ENCODE measurements at regions of chr14 and their contacts with region 1.

Region 1: GRCh38 chr14:50599700-50600444 is 39.9 kb downstream of the ATL1 start:
- DNase-seq: peak; percentile 60
- ATAC-seq: peak; percentile 65; the same call in 1 of the 2 replicates
- H3K4me3 ChIP-seq: no peak overlapping the region
- H3K27ac ChIP-seq: no peak overlapping the region
- H3K4me1 ChIP-seq: peaks cover 1% of the 10 kb centered on the region; the same call in 1 of the 2 replicates
- H3K27me3 ChIP-seq: no peaks in the 10 kb centered on the region
- CTCF ChIP-seq: peak; percentile 66
- POLR2A ChIP-seq: no peak
- RAD21 ChIP-seq: peak; percentile 67

Region 2: GRCh38 chr14:49820176-49820575 is 779.7 kb before region 1 on chr14:
- CTCF ChIA-PET with region 1: no interaction called
- POLR2A ChIA-PET with region 1: interaction called, 14 read pairs
- dilution Hi-C with region 1: no loop called
- in situ Hi-C with region 1: no loop called
- intact Hi-C with region 1: no loop called
- DNase-seq: no peak
- ATAC-seq: no peak
- H3K4me3 ChIP-seq: no peak overlapping the region
- H3K27ac ChIP-seq: no peak overlapping the region
- H3K4me1 ChIP-seq: no peaks in the 10 kb centered on the region
- H3K27me3 ChIP-seq: no peaks in the 10 kb centered on the region
- CTCF ChIP-seq: no peak
- POLR2A ChIP-seq: no peak
- RAD21 ChIP-seq: no peak

Region 3: DNA sequence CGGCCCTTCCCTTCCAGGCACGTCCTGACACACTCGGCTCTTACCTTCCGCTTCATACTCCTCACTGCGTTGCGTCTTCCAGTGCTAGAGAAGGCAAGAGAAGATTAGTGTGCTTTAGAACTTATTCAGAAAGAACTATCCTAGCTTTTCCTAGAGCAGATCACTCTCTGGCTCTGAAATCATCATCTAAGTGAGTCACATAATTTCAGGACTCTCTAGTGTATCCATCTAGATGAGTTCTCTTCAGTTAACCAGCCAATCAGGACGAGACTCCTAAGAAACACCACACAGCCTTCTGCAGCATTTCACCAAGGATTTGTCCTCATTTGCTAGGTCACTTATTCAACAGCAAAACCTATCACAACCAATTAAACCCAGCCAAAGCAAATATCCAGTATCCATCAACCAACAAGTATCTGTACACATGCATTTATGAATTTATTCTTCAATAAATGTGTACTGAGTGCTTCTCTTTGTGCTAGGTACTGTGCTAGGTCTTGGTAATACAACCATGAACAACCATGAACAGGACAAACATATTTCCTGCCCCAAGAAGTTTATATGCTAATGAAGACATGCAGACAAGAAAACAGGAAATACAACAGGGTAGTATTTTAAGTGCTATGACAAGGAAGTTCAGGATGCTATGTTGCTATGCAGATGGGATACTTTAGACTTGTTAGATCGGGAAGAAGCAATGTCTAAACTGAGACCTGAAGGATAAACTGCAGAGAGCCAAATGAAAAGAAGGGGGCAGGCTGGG is 179.0 kb after region 1 on chr14:
- CTCF ChIA-PET with region 1: interaction called, 14 read pairs
- POLR2A ChIA-PET with region 1: no interaction called
- dilution Hi-C with region 1: no loop called
- in situ Hi-C with region 1: no loop called
- intact Hi-C with region 1: no loop called
- DNase-seq: peak; percentile 76
- ATAC-seq: no peak
- H3K4me3 ChIP-seq: no peak overlapping the region
- H3K27ac ChIP-seq: no peak overlapping the region
- H3K4me1 ChIP-seq: peaks cover 11% of the 10 kb centered on the region
- H3K27me3 ChIP-seq: no peaks in the 10 kb centered on the region
- CTCF ChIP-seq: no peak
- POLR2A ChIP-seq: no peak
- RAD21 ChIP-seq: no peak

Region 4: GRCh38 chr14:51219473-51220448 is 619.9 kb after region 1 on chr14:
- CTCF ChIA-PET with region 1: no interaction called
- POLR2A ChIA-PET with region 1: no interaction called
- dilution Hi-C with region 1: no loop called
- in situ Hi-C with region 1: loop called (anchors 25 kb)
- intact Hi-C with region 1: no loop called
- DNase-seq: peak; percentile 54
- ATAC-seq: peak; percentile 56; the same call in 1 of the 2 replicates
- H3K4me3 ChIP-seq: no peak overlapping the region
- H3K27ac ChIP-seq: no peak overlapping the region
- H3K4me1 ChIP-seq: no peaks in the 10 kb centered on the region
- H3K27me3 ChIP-seq: no peaks in the 10 kb centered on the region; the same call in 1 of the 2 replicates
- CTCF ChIP-seq: peak; percentile 68
- POLR2A ChIP-seq: no peak
- RAD21 ChIP-seq: peak; percentile 55